OCI-LY7 (cell line): ENCODE measurements at regions of chr7 and their contacts with region 1.

Region 1: GRCh38 chr7:156969972-156970420 is 20.5 kb downstream of the NOM1 start:
- DNase-seq: peak; percentile 38
- H3K4me3 ChIP-seq: no peak overlapping the region
- H3K27ac ChIP-seq: no peak overlapping the region
- H3K4me1 ChIP-seq: no peaks in the 10 kb centered on the region
- CTCF ChIP-seq: peak; percentile 72

Region 2: DNA sequence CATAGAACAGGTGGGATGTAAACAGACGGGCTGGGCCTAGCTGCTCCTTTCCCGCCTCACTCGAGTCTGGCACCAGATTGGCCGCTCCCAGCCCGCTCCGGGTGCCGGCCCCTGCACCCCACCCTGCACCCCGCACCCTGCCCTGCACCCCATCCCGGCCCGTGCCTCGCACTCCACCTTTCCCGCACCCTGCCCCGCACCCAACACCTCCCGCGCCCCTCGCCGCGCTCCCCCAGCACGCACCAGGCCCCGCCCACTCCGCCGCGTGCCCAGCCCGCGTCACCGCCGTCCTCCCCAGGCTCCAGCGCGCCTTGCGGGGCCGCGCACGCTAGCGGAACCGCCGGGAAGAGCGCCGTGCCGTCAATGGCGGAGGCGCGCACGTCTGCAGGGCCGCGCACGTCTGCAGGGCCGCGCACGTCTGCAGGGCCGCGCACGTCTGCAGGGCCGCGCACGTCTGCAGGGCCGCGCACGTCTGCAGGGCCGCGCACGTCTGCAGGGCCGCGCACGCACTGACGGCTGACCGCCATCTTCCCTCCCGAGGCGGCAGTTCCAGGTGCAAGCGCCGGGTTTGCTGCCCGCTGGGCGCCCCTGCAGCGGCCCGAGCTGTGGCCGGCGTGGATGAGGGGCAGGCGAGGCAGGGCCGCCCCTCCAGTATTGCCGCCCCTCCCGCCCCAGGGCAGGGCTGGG is 168.6 kb after region 1 on chr7 and contains the start of gene UBE3C:
- CTCF ChIA-PET with region 1: no interaction called
- POLR2A ChIA-PET with region 1: no interaction called
- intact Hi-C with region 1: loop called (anchors 5 kb)
- DNase-seq: peak; percentile 93
- H3K4me3 ChIP-seq: peak within 1 kb of the TSS; percentile 99
- H3K27ac ChIP-seq: peak within 1 kb of the TSS; percentile 84
- H3K4me1 ChIP-seq: peaks cover 31% of the 10 kb centered on the region
- CTCF ChIP-seq: no peak
- total RNA-seq, gene UBE3C: 51.5 and 60.4 TPM in 2 replicates

Region 3: DNA sequence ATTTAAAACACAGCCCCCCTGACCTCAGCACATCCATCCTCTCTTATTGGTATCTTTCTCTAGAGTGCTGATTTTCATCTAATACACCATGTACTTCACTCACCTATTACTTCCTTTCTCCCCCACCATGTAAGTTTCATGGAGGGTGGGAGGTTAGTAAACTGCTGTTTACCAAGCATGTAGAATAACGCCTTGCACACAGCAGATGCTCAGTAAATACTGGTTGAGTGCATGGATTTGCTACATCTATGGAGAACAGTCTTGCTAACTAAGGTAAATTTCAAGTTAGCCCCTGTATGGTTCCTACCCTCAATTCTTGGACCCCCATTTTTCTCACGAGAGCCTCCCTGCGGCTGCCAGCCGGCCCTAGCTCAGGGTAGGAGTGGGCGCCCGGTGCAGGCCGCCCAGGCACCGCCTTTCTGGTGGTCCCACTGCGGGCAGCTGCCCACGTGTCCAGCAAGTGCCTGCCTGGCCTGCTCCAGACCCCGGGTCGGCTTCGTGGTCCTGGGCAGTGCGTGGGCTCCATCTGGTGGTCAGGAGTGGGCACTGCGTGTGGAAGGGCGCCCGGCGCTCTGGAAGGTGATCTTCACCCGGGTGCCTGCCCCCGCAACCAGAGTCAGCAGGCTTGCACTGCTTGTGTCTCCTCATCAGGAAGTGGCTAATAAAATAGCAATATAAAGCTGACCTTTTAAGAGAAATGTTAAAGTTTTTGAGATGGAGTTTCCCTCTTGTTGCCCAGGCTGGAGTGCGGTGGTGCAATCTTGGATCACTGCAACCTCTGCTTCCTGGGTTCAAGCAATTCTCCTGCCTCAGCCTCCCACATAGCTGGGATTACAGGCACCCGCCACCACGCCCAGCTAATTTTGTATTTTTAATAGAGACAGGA is 303.5 kb after region 1 on chr7:
- CTCF ChIA-PET with region 1: no interaction called
- POLR2A ChIA-PET with region 1: no interaction called
- intact Hi-C with region 1: loop called (anchors 5 kb)
- DNase-seq: peak; percentile 67
- H3K4me3 ChIP-seq: no peak overlapping the region
- H3K27ac ChIP-seq: no peak overlapping the region
- H3K4me1 ChIP-seq: no peaks in the 10 kb centered on the region
- CTCF ChIP-seq: peak; percentile 91

Region 4: GRCh38 chr7:157284229-157285014 is 314.4 kb after region 1 on chr7:
- CTCF ChIA-PET with region 1: no interaction called
- POLR2A ChIA-PET with region 1: no interaction called
- intact Hi-C with region 1: no loop called
- DNase-seq: no peak
- H3K4me3 ChIP-seq: no peak overlapping the region
- H3K27ac ChIP-seq: no peak overlapping the region
- H3K4me1 ChIP-seq: no peaks in the 10 kb centered on the region
- CTCF ChIP-seq: no peak